Activated CD8-positive, alpha-beta T cell treated with anti-CD3 and anti-CD28 coated beads, Interleukin-2, amount 10 ng/mL, durations not matched to agents 7 days and 5 days (primary cell): ENCODE measurements at regions of chr6 and their contacts with region 1.

Region 1: DNA sequence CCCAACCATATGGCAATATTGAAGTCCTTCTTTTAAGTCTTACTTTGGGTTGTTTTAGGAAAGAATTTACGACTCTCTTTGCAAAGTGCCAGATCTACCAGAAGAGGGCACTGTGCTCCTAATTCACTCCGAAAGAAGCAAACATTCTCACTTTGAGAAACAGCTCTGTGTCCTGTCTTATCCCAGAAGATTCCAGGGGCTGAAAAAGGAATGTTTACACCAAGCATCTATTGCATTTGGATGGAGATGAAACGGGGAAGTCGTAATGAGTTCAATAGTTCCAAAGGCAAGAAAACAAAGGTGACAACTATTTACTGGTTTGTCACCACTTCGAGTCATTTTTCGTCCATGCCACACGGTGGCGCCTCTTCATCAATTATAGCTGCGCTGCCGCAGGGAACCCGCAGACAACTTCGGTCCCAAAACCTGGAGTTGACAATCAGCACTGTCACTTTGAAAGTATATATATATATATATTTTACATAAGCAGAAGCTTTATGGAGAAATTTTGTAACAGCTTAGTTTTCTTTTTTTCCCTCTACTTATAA is 121.6 kb downstream of the MOXD1 start:
- DNase-seq: peak; percentile 80
- ATAC-seq: peak; percentile 84
- H3K4me3 Mint-ChIP-seq: peak overlapping the region; percentile 68
- H3K27ac Mint-ChIP-seq: no peak overlapping the region
- H3K4me1 Mint-ChIP-seq: no peaks in the 10 kb centered on the region
- H3K27me3 Mint-ChIP-seq: peaks cover 9% of the 10 kb centered on the region

Region 2: DNA sequence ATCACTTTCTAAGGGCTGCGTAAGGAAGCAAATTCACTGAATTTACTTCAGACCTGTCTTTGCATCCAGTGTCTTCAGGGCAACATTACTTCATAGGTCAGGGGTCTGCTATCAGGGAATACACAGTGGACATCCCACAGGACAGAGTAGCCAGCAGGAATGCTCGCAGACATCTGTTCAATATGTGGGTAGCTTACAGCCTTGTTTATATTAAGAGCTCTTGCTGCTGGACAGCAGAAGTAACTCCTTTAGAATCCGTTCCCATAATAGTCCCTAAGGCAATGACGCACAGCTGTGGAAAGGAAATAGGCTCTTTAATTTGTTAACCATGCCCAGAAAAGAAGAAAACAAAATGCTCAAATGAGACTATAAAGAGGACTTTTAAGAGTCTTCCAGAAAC is 77.1 kb before region 1 on chr6:
- CTCF ChIA-PET with region 1: no interaction called
- POLR2A ChIA-PET with region 1: no interaction called
- DNase-seq: no peak
- ATAC-seq: no peak
- H3K4me3 Mint-ChIP-seq: no peak overlapping the region
- H3K27ac Mint-ChIP-seq: no peak overlapping the region
- H3K4me1 Mint-ChIP-seq: no peaks in the 10 kb centered on the region
- H3K27me3 Mint-ChIP-seq: no peaks in the 10 kb centered on the region

Region 3: DNA sequence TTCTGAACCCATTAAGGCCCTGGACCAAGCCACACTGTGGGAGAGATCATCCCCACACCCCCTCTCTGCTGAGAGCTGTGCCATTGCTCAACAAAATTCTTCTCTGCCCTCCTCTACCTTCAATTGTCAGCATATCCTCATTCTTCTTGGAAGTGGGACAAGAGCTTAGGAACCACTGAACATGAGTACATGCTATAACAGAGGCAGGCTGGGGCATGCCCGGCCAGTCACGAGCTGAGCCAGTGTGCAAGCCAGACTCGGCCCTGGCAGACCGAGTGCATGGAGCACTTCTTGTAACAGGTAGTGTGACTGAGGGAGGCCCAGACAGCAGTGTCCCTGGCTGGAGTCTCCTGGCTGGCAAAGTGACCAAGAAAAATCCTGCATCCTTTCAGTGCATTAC is 27.6 kb before region 1 on chr6:
- CTCF ChIA-PET with region 1: interaction called, 14 read pairs
- POLR2A ChIA-PET with region 1: no interaction called
- DNase-seq: no peak
- ATAC-seq: no peak
- H3K4me3 Mint-ChIP-seq: no peak overlapping the region
- H3K27ac Mint-ChIP-seq: no peak overlapping the region
- H3K4me1 Mint-ChIP-seq: no peaks in the 10 kb centered on the region
- H3K27me3 Mint-ChIP-seq: peaks cover 2% of the 10 kb centered on the region

Region 4: DNA sequence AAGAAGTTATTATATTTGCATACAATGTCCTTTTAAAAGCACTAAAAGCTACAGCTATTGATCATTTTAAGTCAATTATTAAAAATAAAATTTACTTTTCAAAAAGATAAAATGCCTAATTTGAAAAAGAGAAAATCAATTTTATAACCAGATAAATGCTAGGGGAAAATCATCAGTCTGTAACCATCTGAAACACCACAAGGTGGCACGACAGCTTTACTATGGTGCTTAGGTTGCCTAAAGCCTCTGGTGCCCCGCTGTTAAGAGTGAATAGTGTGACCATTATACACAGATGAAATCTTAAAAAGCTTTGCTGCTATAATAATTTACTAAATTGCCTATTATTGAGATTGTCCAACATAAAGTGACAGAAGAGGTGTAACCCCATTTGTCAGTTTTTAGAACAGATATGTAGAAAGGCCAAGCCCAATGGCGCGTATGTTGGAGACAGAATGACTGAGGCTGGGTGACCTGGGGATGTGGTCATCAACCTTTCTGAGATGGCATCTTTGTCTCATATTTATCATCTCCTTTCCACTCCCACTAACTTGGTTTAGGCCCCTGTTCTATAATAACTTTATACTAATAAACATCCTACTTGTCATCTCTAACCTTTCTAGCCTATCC is 20.8 kb after region 1 on chr6:
- CTCF ChIA-PET with region 1: interaction called, 76 read pairs
- POLR2A ChIA-PET with region 1: no interaction called
- DNase-seq: peak; percentile 28
- ATAC-seq: no peak
- H3K4me3 Mint-ChIP-seq: no peak overlapping the region
- H3K27ac Mint-ChIP-seq: no peak overlapping the region
- H3K4me1 Mint-ChIP-seq: no peaks in the 10 kb centered on the region
- H3K27me3 Mint-ChIP-seq: peaks cover 20% of the 10 kb centered on the region

Region 5: DNA sequence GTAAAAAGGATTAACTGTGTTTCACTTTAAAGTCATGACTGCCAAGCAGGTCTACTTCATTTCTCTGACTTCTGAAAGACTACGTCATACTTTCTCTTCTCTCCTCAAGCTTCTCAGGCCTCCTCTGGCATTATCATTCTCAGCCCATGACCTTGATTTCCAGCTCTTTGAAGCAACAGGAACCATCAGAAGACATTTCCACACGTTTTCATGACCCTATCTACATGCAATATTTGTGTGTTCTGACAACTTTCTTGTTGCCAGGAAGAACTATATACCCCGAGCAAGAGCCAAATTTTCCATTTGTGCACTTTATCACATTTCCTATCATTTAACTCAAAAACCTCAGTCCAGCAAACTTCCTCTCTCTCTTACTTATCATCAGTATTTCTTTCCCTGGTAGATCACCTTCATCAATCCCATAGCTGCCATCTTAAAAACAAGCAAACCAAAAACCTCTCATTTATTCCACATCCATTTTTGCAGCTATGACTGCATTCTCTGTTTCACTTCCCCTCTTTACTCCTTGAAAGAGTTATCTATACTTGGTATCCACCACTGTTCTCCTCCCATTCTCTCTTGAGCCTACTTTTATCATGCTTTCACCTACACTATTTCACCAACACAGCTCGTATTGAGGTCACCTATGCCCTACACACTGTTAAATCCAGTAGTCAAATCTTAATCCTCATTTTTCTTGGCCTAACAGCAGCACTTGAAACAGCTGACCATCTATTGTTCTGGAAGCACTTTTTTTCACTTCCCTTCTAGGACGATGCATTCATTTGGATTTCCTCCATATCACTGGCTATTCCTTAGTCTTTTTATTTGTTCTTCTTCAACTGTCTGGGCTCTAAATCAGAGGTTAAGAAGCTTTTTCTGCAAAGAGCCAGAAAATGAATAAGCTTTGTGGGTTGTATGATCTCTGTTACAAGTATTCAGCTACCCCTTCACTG is 186.1 kb after region 1 on chr6:
- CTCF ChIA-PET with region 1: interaction called, 25 read pairs
- POLR2A ChIA-PET with region 1: no interaction called
- DNase-seq: no peak
- ATAC-seq: no peak
- H3K4me3 Mint-ChIP-seq: no peak overlapping the region
- H3K27ac Mint-ChIP-seq: no peak overlapping the region
- H3K4me1 Mint-ChIP-seq: no peaks in the 10 kb centered on the region
- H3K27me3 Mint-ChIP-seq: no peaks in the 10 kb centered on the region

Region 6: DNA sequence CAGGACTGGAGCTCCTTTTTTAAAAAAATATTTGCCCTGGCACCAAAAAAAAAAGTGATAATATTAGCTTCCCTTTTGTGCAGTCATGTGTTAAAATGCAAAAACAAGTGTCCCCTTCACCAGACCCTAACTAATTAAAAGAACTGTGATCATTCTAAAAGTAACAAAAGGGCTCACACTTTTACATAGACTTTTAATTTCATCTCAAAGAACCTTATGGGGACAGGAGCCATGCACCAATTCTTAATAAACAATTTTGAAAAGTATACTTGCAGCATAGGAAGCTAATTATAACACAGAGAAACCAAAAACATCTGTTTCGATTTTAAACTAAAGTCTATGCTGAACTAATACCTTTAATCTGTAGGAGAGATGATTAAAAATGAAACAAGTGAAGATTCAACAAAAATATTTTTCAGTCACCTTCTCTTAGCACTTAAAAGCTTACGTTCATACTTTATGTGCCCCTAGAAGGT is 216.0 kb after region 1 on chr6:
- CTCF ChIA-PET with region 1: interaction called, 10 read pairs
- POLR2A ChIA-PET with region 1: no interaction called
- DNase-seq: no peak
- ATAC-seq: no peak
- H3K4me3 Mint-ChIP-seq: no peak overlapping the region
- H3K27ac Mint-ChIP-seq: no peak overlapping the region
- H3K4me1 Mint-ChIP-seq: peaks cover 21% of the 10 kb centered on the region
- H3K27me3 Mint-ChIP-seq: no peaks in the 10 kb centered on the region